Sciatic nerve (tissue), 2 donors: ENCODE measurements at regions of chr18 and their contacts with region 1.

Region 1: DNA sequence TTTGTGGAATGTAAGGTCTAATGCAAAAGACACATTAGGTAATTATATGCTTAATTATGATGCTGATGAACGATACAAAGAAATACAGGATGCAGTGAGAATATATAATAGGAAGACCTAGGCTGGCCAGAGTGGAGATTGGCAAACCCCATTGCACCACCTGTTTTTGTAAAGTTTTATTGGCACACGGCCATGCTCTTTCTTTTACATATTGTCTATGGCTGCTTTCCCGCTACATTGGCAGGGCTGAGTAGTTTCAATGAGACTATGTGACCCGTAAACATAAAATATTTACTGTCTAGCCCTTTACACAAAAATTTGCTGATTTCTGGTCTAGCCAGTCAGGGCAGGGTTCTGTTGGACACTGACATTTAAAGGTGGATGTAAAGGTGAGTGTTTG is 5.4 kb downstream of the SEC11C start:
- DNase-seq: no peak
- ATAC-seq: no peak

Region 2: GRCh38 chr18:57164401-57164800 is 1980.6 kb before region 1 on chr18:
- intact Hi-C with region 1: loop called (anchors 5 kb)
- DNase-seq: no peak
- ATAC-seq: no peak